A549 (cell line): ENCODE measurements at regions of chr7 and their contacts with region 1.

Region 1: GRCh38 chr7:1532483-1533424 is 2.3 kb downstream of the MAFK start:
- DNase-seq: peak; percentile 72 to 86
- ATAC-seq: peak; percentile 9 to 22; a peak in 3 of 6 replicates
- H3K4me3 ChIP-seq: peak overlapping the region; percentile 98
- H3K27ac ChIP-seq: peak overlapping the region; percentile 97 to 98
- H3K4me1 ChIP-seq: peaks cover 44% of the 10 kb centered on the region
- CTCF ChIP-seq: no peak
- EP300 ChIP-seq: peak in 1 of 2 experiments; percentile 26; a peak in 2 of 5 replicates
- POLR2A ChIP-seq: peak; percentile 45
- RAD21 ChIP-seq: no peak

Region 2: GRCh38 chr7:1503816-1504775 is 28.7 kb before region 1 on chr7 and contains the start of gene INTS1:
- CTCF ChIA-PET with region 1: interaction called, 43 read pairs
- POLR2A ChIA-PET with region 1: interaction called, 4 read pairs
- DNase-seq: peak; percentile 85 to 95
- ATAC-seq: peak; percentile 86 to 87
- H3K4me3 ChIP-seq: peak within 1 kb of the TSS; percentile 93
- H3K27ac ChIP-seq: peak within 1 kb of the TSS; percentile 87 to 98
- H3K4me1 ChIP-seq: peaks cover 51% of the 10 kb centered on the region
- CTCF ChIP-seq: peak; percentile 86
- EP300 ChIP-seq: peak in 1 of 2 experiments; percentile 16; a peak in 1 of 5 replicates
- POLR2A ChIP-seq: peak; percentile 9
- RAD21 ChIP-seq: peak; percentile 33 to 73; a peak in 4 of 5 replicates
- polyA plus RNA-seq, gene INTS1: 14.6 and 18.4 TPM in 2 replicates

Region 3: GRCh38 chr7:1812509-1813393 is 280.0 kb after region 1 on chr7:
- CTCF ChIA-PET with region 1: no interaction called
- POLR2A ChIA-PET with region 1: no interaction called
- DNase-seq: peak; percentile 27 to 67
- ATAC-seq: peak; percentile 78 to 85; a peak in 5 of 6 replicates
- H3K4me3 ChIP-seq: no peak overlapping the region
- H3K27ac ChIP-seq: no peak overlapping the region
- H3K4me1 ChIP-seq: no peaks in the 10 kb centered on the region
- CTCF ChIP-seq: peak; percentile 54
- EP300 ChIP-seq: no peak
- POLR2A ChIP-seq: no peak
- RAD21 ChIP-seq: peak; percentile 14 to 49; a peak in 3 of 5 replicates